ENCODE measurements at regions of chr12 and their contacts with region 1.

Region 1: DNA sequence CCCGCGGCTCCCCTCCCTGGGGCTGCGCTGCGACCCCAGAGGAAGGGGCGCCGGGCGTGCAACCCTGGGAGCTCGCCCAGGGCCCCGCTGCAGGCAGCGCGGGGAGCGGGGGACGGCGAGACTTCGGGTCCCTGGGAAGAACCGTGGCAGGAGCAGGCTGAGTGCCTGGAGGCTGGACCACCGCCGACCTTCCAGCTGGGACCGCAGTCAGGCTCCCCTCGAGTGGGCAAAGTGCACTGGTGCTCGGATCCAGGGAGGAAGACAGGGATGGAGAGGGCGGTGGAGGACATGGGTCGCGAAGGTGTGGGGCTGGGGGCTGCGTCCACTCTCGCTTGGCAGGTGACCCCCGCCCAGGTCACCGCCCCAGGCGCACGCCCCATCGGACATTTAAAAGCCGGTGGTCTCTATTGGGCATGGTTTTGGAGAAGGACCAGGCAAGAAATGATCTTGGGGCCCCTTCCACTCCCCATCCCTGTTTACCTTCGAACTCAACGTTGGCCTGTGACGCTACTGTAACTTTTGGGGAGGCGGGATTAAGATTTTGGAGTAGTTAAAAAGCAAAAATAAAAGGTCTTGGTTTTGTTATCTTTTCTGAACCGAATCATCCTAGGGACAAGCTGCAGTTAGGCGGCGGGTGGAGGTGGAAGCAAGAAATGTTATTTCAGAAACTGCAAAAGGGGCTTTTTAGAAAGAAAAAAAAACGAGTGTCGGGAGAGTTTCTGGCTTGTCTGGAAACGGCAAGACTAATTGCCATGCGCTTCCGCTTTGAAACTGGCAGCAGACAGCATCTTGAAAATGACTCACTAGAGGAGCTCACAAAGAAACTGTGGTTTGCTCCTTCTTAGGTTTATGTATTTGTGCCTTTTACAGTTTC is 1.0 kb downstream of the ELK3 start:
- DNase-seq: peak in 8 of 9 donors; percentile 34 to 91 (median 71)
- ATAC-seq: peak; percentile 80
- H3K4me3 ChIP-seq: peak overlapping the region; percentile 84
- H3K4me3 Mint-ChIP-seq: peak overlapping the region; percentile 92 to 100 (median 98)
- H3K27ac ChIP-seq: peak overlapping the region; percentile 86
- H3K27ac Mint-ChIP-seq: peak overlapping the region; percentile 95 to 99 (median 99)
- H3K4me1 ChIP-seq: peaks cover 29 to 33% of the 10 kb centered on the region in 2 donors
- H3K4me1 Mint-ChIP-seq: peaks cover 30 to 54% (median 46%) of the 10 kb centered on the region in 7 donors
- H3K27me3 ChIP-seq: no peaks in the 10 kb centered on the region
- H3K27me3 Mint-ChIP-seq: peaks cover 0 to 3% (median 0%) of the 10 kb centered on the region in 5 donors

Region 2: GRCh38 chr12:96035278-96036236 is 159.7 kb before region 1 on chr12 and contains the start of gene LTA4H:
- CTCF ChIA-PET with region 1: no interaction called
- POLR2A ChIA-PET with region 1: no interaction called
- intact Hi-C with region 1: loop called (anchors 1 kb)
- DNase-seq: peak; percentile 86 to 99 (median 97)
- ATAC-seq: peak; percentile 97
- H3K4me3 ChIP-seq: peak within 1 kb of the TSS; percentile 85
- H3K4me3 Mint-ChIP-seq: no peak within 1 kb of the TSS
- H3K27ac ChIP-seq: peak within 1 kb of the TSS; percentile 81
- H3K27ac Mint-ChIP-seq: no peak within 1 kb of the TSS
- H3K4me1 ChIP-seq: peaks cover 4 to 9% of the 10 kb centered on the region in 2 donors
- H3K4me1 Mint-ChIP-seq: peaks cover 5 to 19% (median 17%) of the 10 kb centered on the region in 7 donors
- H3K27me3 ChIP-seq: no peaks in the 10 kb centered on the region
- H3K27me3 Mint-ChIP-seq: no peaks in the 10 kb centered on the region
- total RNA-seq, gene LTA4H: 52.5 to 151 (median 63.4) TPM

Region 3: DNA sequence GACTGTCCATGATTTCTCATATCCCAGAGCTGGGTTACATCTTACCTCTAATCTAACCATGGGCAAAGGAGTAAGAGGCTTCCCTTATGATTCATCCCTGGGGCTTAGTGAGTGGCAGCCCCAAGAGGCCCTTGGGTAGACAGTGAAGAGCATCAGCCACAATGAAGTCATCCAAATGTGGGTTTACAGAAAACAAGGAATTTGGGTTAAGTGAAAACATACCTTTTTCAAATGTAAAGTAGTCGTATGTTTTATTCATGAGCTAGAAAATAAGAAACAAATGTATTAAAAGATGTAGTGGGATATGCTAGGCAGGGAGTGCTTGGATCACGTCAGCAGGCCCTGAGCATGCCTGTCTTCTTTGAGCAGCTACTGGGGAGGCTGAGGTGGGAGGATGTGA is 55.0 kb before region 1 on chr12:
- CTCF ChIA-PET with region 1: no interaction called
- POLR2A ChIA-PET with region 1: no interaction called
- intact Hi-C with region 1: loop called in 1 of 2 experiments (anchors 10 kb)
- DNase-seq: no peak
- ATAC-seq: no peak
- H3K4me3 ChIP-seq: no peak overlapping the region
- H3K4me3 Mint-ChIP-seq: no peak overlapping the region
- H3K27ac ChIP-seq: no peak overlapping the region
- H3K27ac Mint-ChIP-seq: peak overlapping the region in 1 of 9 donors; percentile 6
- H3K4me1 ChIP-seq: peaks cover 4 to 13% of the 10 kb centered on the region in 2 donors
- H3K4me1 Mint-ChIP-seq: peaks cover 15 to 33% (median 25%) of the 10 kb centered on the region in 7 donors
- H3K27me3 ChIP-seq: no peaks in the 10 kb centered on the region
- H3K27me3 Mint-ChIP-seq: no peaks in the 10 kb centered on the region

Region 4: DNA sequence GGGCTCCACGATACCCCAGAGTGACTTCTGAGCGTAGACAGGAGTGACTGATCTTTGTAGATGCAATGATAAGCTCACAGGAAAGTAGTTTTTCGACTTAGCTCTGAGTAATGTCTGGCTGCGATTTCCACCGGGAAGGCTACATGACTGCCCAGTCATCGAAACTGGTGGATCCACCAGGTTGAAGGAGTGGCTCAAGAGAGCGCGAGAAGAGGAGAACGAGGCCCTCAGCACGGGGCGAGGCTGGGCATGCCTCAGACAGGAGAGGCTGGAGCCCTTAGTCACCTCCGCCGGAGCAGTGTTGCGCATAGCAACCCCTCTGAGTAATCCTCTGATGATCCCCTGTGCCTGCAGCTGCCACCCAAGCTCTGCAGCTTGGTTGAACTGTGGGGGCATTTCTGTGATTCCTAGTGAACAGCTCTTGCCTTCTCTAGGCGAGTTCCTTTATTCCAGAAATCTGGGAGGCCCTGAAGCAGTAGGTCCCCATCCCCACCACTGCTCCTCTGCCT is 24.5 kb after region 1 on chr12:
- CTCF ChIA-PET with region 1: interaction called, 4 read pairs
- POLR2A ChIA-PET with region 1: interaction called, 11 read pairs
- intact Hi-C with region 1: loop called (anchors 1 kb)
- DNase-seq: no peak
- ATAC-seq: no peak
- H3K4me3 ChIP-seq: no peak overlapping the region
- H3K4me3 Mint-ChIP-seq: no peak overlapping the region
- H3K27ac ChIP-seq: no peak overlapping the region
- H3K27ac Mint-ChIP-seq: peak overlapping the region in 2 of 9 donors; percentile 20 to 51
- H3K4me1 ChIP-seq: peaks cover 6 to 7% of the 10 kb centered on the region in 2 donors
- H3K4me1 Mint-ChIP-seq: peaks cover 12 to 60% (median 40%) of the 10 kb centered on the region in 7 donors
- H3K27me3 ChIP-seq: no peaks in the 10 kb centered on the region
- H3K27me3 Mint-ChIP-seq: no peaks in the 10 kb centered on the region

Region 5: GRCh38 chr12:96314723-96315122 is 119.5 kb after region 1 on chr12:
- CTCF ChIA-PET with region 1: no interaction called
- POLR2A ChIA-PET with region 1: no interaction called
- intact Hi-C with region 1: no loop called
- DNase-seq: no peak
- ATAC-seq: no peak
- H3K4me3 ChIP-seq: no peak overlapping the region
- H3K4me3 Mint-ChIP-seq: peak overlapping the region in 7 of 10 donors; percentile 20 to 58 (median 38)
- H3K27ac ChIP-seq: no peak overlapping the region
- H3K27ac Mint-ChIP-seq: peak overlapping the region in 7 of 9 donors; percentile 59 to 97 (median 81)
- H3K4me1 ChIP-seq: peaks cover 0 to 4% of the 10 kb centered on the region in 2 donors
- H3K4me1 Mint-ChIP-seq: peaks cover 5 to 37% (median 20%) of the 10 kb centered on the region in 7 donors
- H3K27me3 ChIP-seq: no peaks in the 10 kb centered on the region
- H3K27me3 Mint-ChIP-seq: no peaks in the 10 kb centered on the region

Region 6: DNA sequence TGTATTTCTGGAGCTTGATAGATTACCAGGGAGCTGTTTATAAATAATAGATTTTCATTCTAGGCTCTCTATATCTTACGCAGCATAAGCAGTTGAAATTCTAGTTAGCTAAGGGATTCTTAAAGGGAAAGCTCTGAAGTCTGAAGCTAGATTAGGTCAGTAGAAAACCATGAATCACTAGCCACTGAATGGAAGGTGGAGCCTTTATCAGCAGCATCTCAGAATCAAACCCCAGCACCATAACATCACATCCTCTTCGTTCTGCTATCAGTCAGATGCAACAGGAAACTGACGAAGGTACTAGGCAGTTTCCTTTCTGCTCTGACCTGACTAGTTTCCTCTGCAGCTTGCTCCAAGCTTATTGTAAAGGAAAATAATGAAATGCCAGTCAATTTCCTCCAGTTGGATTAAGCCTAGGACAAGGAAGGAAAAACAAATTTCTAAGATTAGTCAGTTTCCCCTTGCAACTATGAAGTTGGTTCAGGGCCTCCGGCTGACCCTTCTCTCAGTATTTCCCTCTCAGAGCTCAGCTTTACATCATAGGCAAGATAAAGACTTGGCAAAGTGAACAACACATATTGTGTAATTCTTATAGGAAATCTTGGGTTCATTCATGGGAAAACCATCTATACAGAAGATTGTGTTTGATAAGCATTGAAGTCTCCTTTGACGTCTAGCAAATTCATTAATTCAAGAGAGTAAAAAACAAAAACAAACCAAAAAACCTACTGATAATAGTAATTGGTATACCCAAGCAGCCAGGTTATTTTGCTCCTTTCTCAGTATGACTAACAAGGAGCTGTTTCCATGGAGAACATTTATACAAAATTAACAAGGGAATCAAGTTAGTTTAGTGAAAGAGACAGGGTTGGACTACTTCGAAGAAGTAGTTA is 250.7 kb after region 1 on chr12:
- CTCF ChIA-PET with region 1: no interaction called
- POLR2A ChIA-PET with region 1: no interaction called
- intact Hi-C with region 1: loop called in 1 of 2 experiments (anchors 1 kb)
- DNase-seq: peak in 8 of 9 donors; percentile 50 to 83 (median 78)
- ATAC-seq: peak; percentile 97
- H3K4me3 ChIP-seq: peak overlapping the region; percentile 10
- H3K4me3 Mint-ChIP-seq: peak overlapping the region; percentile 6 to 76 (median 63)
- H3K27ac ChIP-seq: peak overlapping the region; percentile 80
- H3K27ac Mint-ChIP-seq: peak overlapping the region; percentile 83 to 97 (median 92)
- H3K4me1 ChIP-seq: peaks cover 23 to 26% of the 10 kb centered on the region in 2 donors
- H3K4me1 Mint-ChIP-seq: peaks cover 17 to 55% (median 46%) of the 10 kb centered on the region in 7 donors
- H3K27me3 ChIP-seq: no peaks in the 10 kb centered on the region
- H3K27me3 Mint-ChIP-seq: no peaks in the 10 kb centered on the region

Region 7: GRCh38 chr12:97616946-97617345 is 1421.7 kb after region 1 on chr12:
- CTCF ChIA-PET with region 1: no interaction called
- POLR2A ChIA-PET with region 1: no interaction called
- intact Hi-C with region 1: no loop called
- DNase-seq: no peak
- ATAC-seq: no peak
- H3K4me3 ChIP-seq: no peak overlapping the region
- H3K4me3 Mint-ChIP-seq: no peak overlapping the region
- H3K27ac ChIP-seq: no peak overlapping the region
- H3K27ac Mint-ChIP-seq: no peak overlapping the region
- H3K4me1 ChIP-seq: no peaks in the 10 kb centered on the region
- H3K4me1 Mint-ChIP-seq: no peaks in the 10 kb centered on the region
- H3K27me3 ChIP-seq: no peaks in the 10 kb centered on the region
- H3K27me3 Mint-ChIP-seq: no peaks in the 10 kb centered on the region

Measured in naive thymus-derived CD4-positive, alpha-beta T cell (primary cell).